ENCODE measurements at regions of chr15 and their contacts with region 1.

Region 1: GRCh38 chr15:96356494-96357455 is 26.3 kb downstream of the NR2F2 start:
- DNase-seq: peak; percentile 76 to 88 (median 80)
- ATAC-seq: peak; percentile 49 to 72 (median 63)
- H3K4me3 ChIP-seq: peak overlapping the region; percentile 35 to 77 (median 65)
- H3K27ac ChIP-seq: peak overlapping the region in 11 of 12 donors; percentile 44 to 77 (median 59)
- H3K4me1 ChIP-seq: peaks cover 0 to 66% (median 30%) of the 10 kb centered on the region in 12 donors
- H3K27me3 ChIP-seq: peaks cover 6 to 98% (median 61%) of the 10 kb centered on the region in 9 donors
- CTCF ChIP-seq: peak; percentile 93 to 99 (median 97)
- POLR2A ChIP-seq: peak in 1 of 2 donors; percentile 18

Region 2: DNA sequence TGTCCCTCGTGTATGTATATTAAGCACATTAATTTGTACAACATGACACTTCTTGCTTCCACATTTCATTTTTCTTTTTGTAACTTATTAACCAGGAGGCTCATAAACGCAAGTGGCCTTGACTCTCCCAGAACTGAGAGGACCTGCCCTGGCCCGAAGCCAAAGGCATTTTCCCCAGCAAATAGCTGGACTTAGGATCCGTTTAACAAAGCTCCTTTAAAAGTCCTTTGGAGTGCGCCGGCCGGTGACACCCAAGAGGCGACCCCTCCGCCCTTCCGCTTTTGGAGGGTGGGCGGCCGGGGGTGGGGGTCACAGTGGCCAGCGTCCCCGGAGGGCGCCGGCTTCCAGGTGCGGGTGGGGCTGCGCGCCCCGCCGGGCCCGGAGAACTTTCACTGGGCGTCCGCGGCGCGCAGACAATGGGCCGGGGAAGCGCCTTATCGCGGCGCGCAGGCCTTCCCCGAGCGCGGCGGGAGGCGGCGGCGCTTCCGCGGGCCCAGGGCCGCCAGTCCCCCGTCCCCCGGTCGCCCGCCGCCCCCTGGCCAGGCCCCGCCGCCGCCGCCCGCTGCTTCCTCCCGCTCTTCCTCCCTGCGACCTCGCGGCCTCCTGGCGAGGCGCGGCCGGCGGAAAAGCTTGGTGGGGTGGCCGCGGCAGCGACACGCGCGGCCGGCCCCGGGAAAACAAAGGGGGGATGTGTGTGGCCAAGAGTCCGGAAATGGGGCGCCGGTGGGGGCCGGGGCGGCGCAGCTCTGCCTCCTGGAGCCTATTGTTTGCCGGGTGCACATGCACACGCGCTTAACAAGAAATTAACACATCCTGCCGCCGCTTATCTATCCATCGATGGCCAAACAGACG is 1512.0 kb before region 1 on chr15:
- intact Hi-C with region 1: loop called in 1 of 10 experiments (anchors 10 kb)
- DNase-seq: peak; percentile 71 to 88 (median 80)
- ATAC-seq: peak; percentile 85 to 95 (median 92)
- H3K4me3 ChIP-seq: peak overlapping the region in 10 of 12 donors; percentile 30 to 57 (median 42)
- H3K27ac ChIP-seq: peak overlapping the region; percentile 15 to 79 (median 62)
- H3K4me1 ChIP-seq: peaks cover 0 to 19% (median 4%) of the 10 kb centered on the region in 12 donors
- H3K27me3 ChIP-seq: peaks cover 0 to 20% (median 0%) of the 10 kb centered on the region in 9 donors
- CTCF ChIP-seq: peak in 5 of 12 donors; percentile 12 to 39 (median 24)
- POLR2A ChIP-seq: no peak

Region 3: GRCh38 chr15:96409215-96410138 is 52.7 kb after region 1 on chr15:
- intact Hi-C with region 1: loop called in 1 of 10 experiments (anchors 5 kb)
- DNase-seq: no peak
- ATAC-seq: no peak
- H3K4me3 ChIP-seq: peak overlapping the region in 11 of 12 donors; percentile 22 to 50 (median 40)
- H3K27ac ChIP-seq: no peak overlapping the region
- H3K4me1 ChIP-seq: peaks cover 0 to 19% (median 14%) of the 10 kb centered on the region in 12 donors
- H3K27me3 ChIP-seq: peaks cover 46 to 95% (median 80%) of the 10 kb centered on the region in 9 donors
- CTCF ChIP-seq: no peak
- POLR2A ChIP-seq: no peak

Region 4: DNA sequence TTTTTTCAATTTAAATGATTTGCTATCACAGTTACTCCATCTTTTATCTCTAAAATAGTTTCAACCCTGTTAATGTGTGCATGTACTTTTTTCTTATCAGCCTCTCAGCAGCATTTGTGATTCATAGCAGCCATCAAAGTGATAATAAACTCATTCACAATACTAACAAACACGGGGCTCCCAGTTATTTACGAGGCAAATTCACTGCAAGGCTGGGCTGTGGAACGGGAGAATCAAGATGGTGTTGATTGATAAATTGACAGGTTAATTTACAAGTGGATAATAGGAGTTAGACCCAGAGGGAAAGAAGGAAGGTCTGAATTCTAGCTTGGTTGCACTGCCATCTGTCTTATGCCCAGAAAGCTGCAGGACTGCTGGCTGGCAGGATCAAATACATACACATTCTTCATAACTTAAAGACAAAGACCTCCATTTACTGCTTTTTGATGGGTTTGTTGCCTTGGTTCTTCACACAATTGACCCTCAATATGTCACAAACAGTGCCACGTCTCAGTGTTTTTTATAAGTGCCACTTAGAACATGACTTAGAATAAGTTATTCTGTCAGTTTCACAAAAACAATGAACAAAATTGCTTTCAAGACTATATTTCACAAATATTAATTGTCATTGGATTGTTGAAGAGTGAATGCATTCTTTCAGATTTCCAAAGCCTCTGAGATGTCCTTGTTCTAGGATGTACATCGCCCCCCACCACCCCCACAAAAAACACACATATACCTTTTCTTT is 536.6 kb after region 1 on chr15:
- intact Hi-C with region 1: loop called in 7 of 10 experiments (anchors 5 to 10 kb)
- DNase-seq: no peak
- ATAC-seq: no peak
- H3K4me3 ChIP-seq: no peak overlapping the region
- H3K27ac ChIP-seq: no peak overlapping the region
- H3K4me1 ChIP-seq: peaks cover 0 to 4% (median 0%) of the 10 kb centered on the region in 12 donors
- H3K27me3 ChIP-seq: peaks cover 0 to 3% (median 0%) of the 10 kb centered on the region in 9 donors
- CTCF ChIP-seq: peak in 11 of 12 donors; percentile 11 to 59 (median 44)
- POLR2A ChIP-seq: no peak

Region 5: GRCh38 chr15:97759363-97759762 is 1402.6 kb after region 1 on chr15:
- intact Hi-C with region 1: loop called in 4 of 10 experiments (anchors 2 to 10 kb)
- DNase-seq: no peak
- ATAC-seq: no peak
- H3K4me3 ChIP-seq: no peak overlapping the region
- H3K27ac ChIP-seq: no peak overlapping the region
- H3K4me1 ChIP-seq: no peaks in the 10 kb centered on the region
- H3K27me3 ChIP-seq: peaks cover 0 to 9% (median 0%) of the 10 kb centered on the region in 9 donors
- CTCF ChIP-seq: no peak
- POLR2A ChIP-seq: no peak

Measured in heart left ventricle (tissue), 16 donors.